CD14-positive monocyte (primary cell): ENCODE measurements at regions of chr12 and their contacts with region 1.

Region 1: GRCh38 chr12:89352492-89353187 is at the start of gene DUSP6:
- DNase-seq: peak; percentile 96 to 98 (median 97)
- H3K4me3 ChIP-seq: peak within 1 kb of the TSS; percentile 85 to 99 (median 98)
- H3K4me3 Mint-ChIP-seq: peak within 1 kb of the TSS; percentile 99 to 100
- H3K27ac ChIP-seq: peak within 1 kb of the TSS; percentile 89 to 96
- H3K27ac Mint-ChIP-seq: peak within 1 kb of the TSS; percentile 91 to 98 (median 97)
- H3K4me1 ChIP-seq: peaks cover 38 to 55% of the 10 kb centered on the region in 2 donors
- H3K4me1 Mint-ChIP-seq: peaks cover 44% of the 10 kb centered on the region
- H3K27me3 ChIP-seq: no peaks in the 10 kb centered on the region
- H3K27me3 Mint-ChIP-seq: no peaks in the 10 kb centered on the region
- CTCF ChIP-seq: no peak
- polyA plus RNA-seq, gene DUSP6: 195 to 880 (median 653) TPM

Region 2: DNA sequence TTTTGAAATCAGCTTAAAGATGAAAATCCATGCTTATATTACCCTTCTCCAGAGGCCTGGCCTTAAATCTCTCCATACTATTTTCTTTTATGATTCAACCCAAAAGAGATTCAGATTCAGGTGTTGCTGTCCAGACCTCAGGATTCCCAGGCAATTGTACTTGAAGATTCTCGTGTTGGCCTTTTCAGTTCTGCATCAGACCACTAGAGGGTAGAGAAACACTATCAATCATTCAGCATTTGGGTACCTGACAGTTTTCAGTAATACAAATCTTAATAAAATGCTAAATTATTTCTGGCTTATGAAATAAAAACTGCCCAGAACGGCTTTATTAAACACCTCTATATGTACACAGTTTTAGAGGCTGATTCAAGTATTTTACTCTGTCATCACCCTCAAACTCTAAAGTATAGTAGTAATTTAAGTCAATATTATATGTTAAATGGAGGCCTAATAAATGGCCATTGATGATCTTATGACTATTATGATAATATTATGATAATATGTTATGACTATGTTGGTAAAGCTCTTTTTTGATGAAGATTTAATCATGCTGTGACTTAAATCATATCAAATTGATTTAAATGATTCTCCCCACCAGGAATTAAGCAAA is 301.5 kb before region 1 on chr12:
- intact Hi-C with region 1: loop called (anchors 5 to 10 kb)
- DNase-seq: peak; percentile 55 to 70 (median 64)
- H3K4me3 ChIP-seq: no peak overlapping the region
- H3K4me3 Mint-ChIP-seq: no peak overlapping the region
- H3K27ac ChIP-seq: no peak overlapping the region
- H3K27ac Mint-ChIP-seq: peak overlapping the region in 3 of 7 donors; percentile 37 to 45 (median 44)
- H3K4me1 ChIP-seq: peaks cover 12% of the 10 kb centered on the region in 2 donors
- H3K4me1 Mint-ChIP-seq: peaks cover 21% of the 10 kb centered on the region
- H3K27me3 ChIP-seq: no peaks in the 10 kb centered on the region
- H3K27me3 Mint-ChIP-seq: peaks cover 0 to 6% (median 2%) of the 10 kb centered on the region in 3 donors
- CTCF ChIP-seq: peak; percentile 95

Region 3: DNA sequence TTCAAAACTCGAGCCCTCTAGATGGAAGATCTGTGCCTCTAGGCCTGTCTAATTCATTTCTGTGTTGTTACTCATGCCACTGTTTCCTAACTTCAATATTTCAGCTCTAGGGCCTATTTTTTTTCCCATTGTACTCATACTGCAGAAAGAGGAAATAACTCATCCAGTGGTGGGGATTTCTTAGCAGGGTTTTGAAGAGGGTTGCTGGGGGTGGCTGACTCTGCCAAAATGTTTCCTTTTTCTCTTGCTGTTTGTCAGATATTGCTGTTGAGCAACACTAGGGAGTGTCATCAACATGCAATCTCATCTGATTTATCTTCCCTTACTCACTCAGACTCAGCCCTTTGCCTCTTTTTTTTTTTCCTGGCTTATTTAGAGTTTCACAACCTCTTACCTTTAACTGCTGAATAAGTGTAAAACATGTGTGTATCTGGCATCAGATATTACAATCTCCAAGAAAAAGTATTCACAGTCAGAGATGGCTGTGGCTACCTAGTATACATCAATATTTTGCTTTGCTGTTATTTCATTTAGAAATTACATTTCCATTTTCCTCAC is 189.9 kb before region 1 on chr12:
- intact Hi-C with region 1: loop called (anchors 2 to 5 kb)
- DNase-seq: peak; percentile 98 to 100 (median 99)
- H3K4me3 ChIP-seq: no peak overlapping the region
- H3K4me3 Mint-ChIP-seq: no peak overlapping the region
- H3K27ac ChIP-seq: peak overlapping the region; percentile 85 to 99
- H3K27ac Mint-ChIP-seq: no peak overlapping the region
- H3K4me1 ChIP-seq: peaks cover 88 to 95% of the 10 kb centered on the region in 2 donors
- H3K4me1 Mint-ChIP-seq: peaks cover 27% of the 10 kb centered on the region
- H3K27me3 ChIP-seq: no peaks in the 10 kb centered on the region
- H3K27me3 Mint-ChIP-seq: no peaks in the 10 kb centered on the region
- CTCF ChIP-seq: no peak

Region 4: GRCh38 chr12:89261982-89262381 is 90.7 kb before region 1 on chr12:
- intact Hi-C with region 1: loop called in 1 of 2 experiments (anchors 10 kb)
- DNase-seq: no peak
- H3K4me3 ChIP-seq: no peak overlapping the region
- H3K4me3 Mint-ChIP-seq: no peak overlapping the region
- H3K27ac ChIP-seq: no peak overlapping the region
- H3K27ac Mint-ChIP-seq: no peak overlapping the region
- H3K4me1 ChIP-seq: peaks cover 18 to 19% of the 10 kb centered on the region in 2 donors
- H3K4me1 Mint-ChIP-seq: peaks cover 24% of the 10 kb centered on the region
- H3K27me3 ChIP-seq: no peaks in the 10 kb centered on the region
- H3K27me3 Mint-ChIP-seq: peaks cover 0 to 4% (median 0%) of the 10 kb centered on the region in 3 donors
- CTCF ChIP-seq: no peak

Region 5: GRCh38 chr12:89319122-89319521 is 33.5 kb before region 1 on chr12:
- intact Hi-C with region 1: no loop called
- DNase-seq: no peak
- H3K4me3 ChIP-seq: no peak overlapping the region
- H3K4me3 Mint-ChIP-seq: no peak overlapping the region
- H3K27ac ChIP-seq: no peak overlapping the region
- H3K27ac Mint-ChIP-seq: no peak overlapping the region
- H3K4me1 ChIP-seq: peaks cover 5 to 7% of the 10 kb centered on the region in 2 donors
- H3K4me1 Mint-ChIP-seq: peaks cover 16% of the 10 kb centered on the region
- H3K27me3 ChIP-seq: no peaks in the 10 kb centered on the region
- H3K27me3 Mint-ChIP-seq: no peaks in the 10 kb centered on the region
- CTCF ChIP-seq: no peak

Region 6: GRCh38 chr12:89461649-89462612 is 109.3 kb after region 1 on chr12:
- intact Hi-C with region 1: loop called (anchors 2 to 10 kb)
- DNase-seq: peak; percentile 45 to 73 (median 59)
- H3K4me3 ChIP-seq: peak overlapping the region in 1 of 3 experiments; percentile 13
- H3K4me3 Mint-ChIP-seq: peak overlapping the region in 1 of 2 donors; percentile 71
- H3K27ac ChIP-seq: no peak overlapping the region
- H3K27ac Mint-ChIP-seq: peak overlapping the region in 3 of 7 donors; percentile 17 to 58 (median 51)
- H3K4me1 ChIP-seq: peaks cover 7 to 10% of the 10 kb centered on the region in 2 donors
- H3K4me1 Mint-ChIP-seq: peaks cover 13% of the 10 kb centered on the region
- H3K27me3 ChIP-seq: no peaks in the 10 kb centered on the region
- H3K27me3 Mint-ChIP-seq: no peaks in the 10 kb centered on the region
- CTCF ChIP-seq: peak; percentile 81

Region 7: GRCh38 chr12:90253674-90254181 is 901.1 kb after region 1 on chr12:
- intact Hi-C with region 1: no loop called
- DNase-seq: peak; percentile 70 to 94 (median 74)
- H3K4me3 ChIP-seq: peak overlapping the region in 1 of 3 experiments; percentile 40
- H3K4me3 Mint-ChIP-seq: peak overlapping the region; percentile 16 to 42
- H3K27ac ChIP-seq: peak overlapping the region in 1 of 2 donors; percentile 30
- H3K27ac Mint-ChIP-seq: peak overlapping the region in 6 of 7 donors; percentile 40 to 86 (median 72)
- H3K4me1 ChIP-seq: peaks cover 17 to 19% of the 10 kb centered on the region in 2 donors
- H3K4me1 Mint-ChIP-seq: peaks cover 20% of the 10 kb centered on the region
- H3K27me3 ChIP-seq: no peaks in the 10 kb centered on the region
- H3K27me3 Mint-ChIP-seq: no peaks in the 10 kb centered on the region
- CTCF ChIP-seq: peak; percentile 67